Activated CD4-positive, alpha-beta T cell treated with anti-CD3 and anti-CD28 coated beads for 36 hours (primary cell): ENCODE measurements at regions of chr17 and their contacts with region 1.

Region 1: DNA sequence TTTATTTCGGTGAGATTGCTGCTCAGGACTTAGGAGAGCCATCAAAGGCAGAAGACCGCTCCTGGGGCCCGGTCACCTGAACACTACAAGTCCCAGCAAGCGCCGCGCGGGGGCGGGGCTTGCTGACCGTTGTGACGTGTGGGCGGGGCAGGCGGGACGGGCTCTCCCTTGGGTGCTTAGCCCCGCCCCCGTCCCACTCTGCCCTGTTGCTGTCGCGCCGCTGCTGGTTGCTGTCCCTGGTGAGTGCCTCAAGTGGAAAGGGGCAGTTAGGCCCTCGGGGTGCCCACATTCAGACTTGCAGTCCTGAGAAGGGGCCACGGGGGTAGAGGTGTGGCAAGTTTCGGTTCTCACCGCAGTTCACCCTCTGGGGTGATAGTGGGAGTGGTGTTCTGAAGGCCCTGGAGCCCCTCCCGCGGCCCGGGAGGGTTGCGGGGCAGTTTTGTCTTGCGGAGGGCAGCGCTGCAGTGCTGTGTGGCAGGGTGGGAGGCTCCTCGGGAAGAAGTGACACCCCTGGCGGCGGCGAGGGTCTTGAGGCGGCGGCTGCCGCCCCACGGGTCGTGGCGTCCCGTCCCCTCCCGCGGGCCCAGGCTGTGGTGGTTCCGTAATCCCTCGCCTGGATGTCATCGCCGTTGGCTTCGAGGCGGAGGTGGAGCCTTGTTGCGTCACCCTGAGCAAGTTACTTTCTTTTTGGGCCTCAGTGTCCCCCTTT is at the start of gene CALCOCO2:
- DNase-seq: peak; percentile 95
- ATAC-seq: peak; percentile 91
- H3K4me3 Mint-ChIP-seq: peak within 1 kb of the TSS; percentile 84
- H3K27ac Mint-ChIP-seq: peak within 1 kb of the TSS; percentile 96
- H3K4me1 Mint-ChIP-seq: peaks cover 45% of the 10 kb centered on the region
- H3K27me3 Mint-ChIP-seq: no peaks in the 10 kb centered on the region
- total RNA-seq, gene CALCOCO2: 66.7 to 102 TPM

Region 2: GRCh38 chr17:48107168-48108132 is 723.5 kb before region 1 on chr17 and contains the start of gene SNX11:
- CTCF ChIA-PET with region 1: interaction called, 3 read pairs
- POLR2A ChIA-PET with region 1: no interaction called
- intact Hi-C with region 1: loop called in 1 of 2 experiments (anchors 5 kb)
- DNase-seq: peak; percentile 97
- ATAC-seq: peak; percentile 87
- H3K4me3 Mint-ChIP-seq: peak within 1 kb of the TSS; percentile 97
- H3K27ac Mint-ChIP-seq: peak within 1 kb of the TSS; percentile 98
- H3K4me1 Mint-ChIP-seq: peaks cover 61% of the 10 kb centered on the region
- H3K27me3 Mint-ChIP-seq: no peaks in the 10 kb centered on the region
- total RNA-seq, gene SNX11: 18.0 to 21.4 TPM

Region 3: DNA sequence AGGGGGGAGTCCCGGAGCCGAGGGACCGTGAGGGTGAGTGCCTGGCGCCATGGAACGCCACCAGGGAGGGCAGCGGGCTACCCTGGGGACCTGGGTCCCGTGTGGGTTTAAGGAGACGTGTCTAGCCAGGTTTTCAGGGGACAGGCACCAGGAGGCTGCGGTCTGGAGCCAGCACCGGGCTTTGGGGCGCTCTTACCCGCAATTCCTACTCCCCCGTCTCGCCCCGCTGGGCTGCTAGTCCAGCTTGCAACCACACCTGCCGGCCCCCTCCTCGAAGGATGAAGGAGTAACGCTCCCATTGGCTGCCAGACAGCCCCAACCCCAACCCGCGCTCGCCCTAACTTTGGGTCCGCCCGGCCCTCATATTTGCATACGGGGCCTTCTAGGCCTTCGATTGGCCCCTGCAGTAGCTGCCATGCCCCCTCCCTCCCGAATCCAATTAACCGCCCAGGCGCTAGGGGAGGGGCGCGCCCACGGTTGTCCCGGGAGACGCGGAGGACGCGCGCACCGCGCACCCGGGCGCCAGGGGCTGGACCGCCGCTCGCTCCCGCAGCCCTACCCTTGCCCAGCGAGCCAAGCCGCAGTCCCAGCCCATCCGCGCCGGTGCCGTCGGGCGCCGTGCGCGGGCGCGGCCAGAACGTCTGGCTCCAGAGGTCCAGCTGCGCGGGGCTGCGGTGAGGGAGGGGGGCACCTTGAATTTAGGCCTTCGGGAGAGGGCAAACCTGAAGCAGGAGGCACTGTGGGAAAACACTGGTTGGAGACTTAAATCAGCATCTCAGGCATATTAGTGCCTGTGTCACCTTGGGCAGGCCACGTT is 14.0 kb before region 1 on chr17 and contains the start of gene TTLL6:
- CTCF ChIA-PET with region 1: interaction called, 12 read pairs
- POLR2A ChIA-PET with region 1: no interaction called
- intact Hi-C with region 1: loop called in 1 of 2 experiments (anchors 1 kb)
- DNase-seq: peak; percentile 80
- ATAC-seq: peak; percentile 93
- H3K4me3 Mint-ChIP-seq: peak within 1 kb of the TSS; percentile 63
- H3K27ac Mint-ChIP-seq: no peak within 1 kb of the TSS
- H3K4me1 Mint-ChIP-seq: peaks cover 15% of the 10 kb centered on the region
- H3K27me3 Mint-ChIP-seq: peaks cover 35% of the 10 kb centered on the region
- total RNA-seq, gene TTLL6: not detected

Region 4: GRCh38 chr17:48841395-48841831 is 10.4 kb after region 1 on chr17:
- CTCF ChIA-PET with region 1: interaction called, 10 read pairs
- POLR2A ChIA-PET with region 1: no interaction called
- intact Hi-C with region 1: loop called (anchors 1 kb)
- DNase-seq: peak; percentile 64
- ATAC-seq: peak; percentile 92
- H3K4me3 Mint-ChIP-seq: peak overlapping the region; percentile 27
- H3K27ac Mint-ChIP-seq: peak overlapping the region; percentile 51
- H3K4me1 Mint-ChIP-seq: peaks cover 57% of the 10 kb centered on the region
- H3K27me3 Mint-ChIP-seq: peaks cover under 1% of the 10 kb centered on the region

Region 5: GRCh38 chr17:48908047-48908843 is 77.3 kb after region 1 on chr17 and contains the start of gene UBE2Z:
- CTCF ChIA-PET with region 1: no interaction called
- POLR2A ChIA-PET with region 1: no interaction called
- intact Hi-C with region 1: loop called in 1 of 2 experiments (anchors 1 kb)
- DNase-seq: peak; percentile 94
- ATAC-seq: peak; percentile 86
- H3K4me3 Mint-ChIP-seq: peak within 1 kb of the TSS; percentile 89
- H3K27ac Mint-ChIP-seq: peak within 1 kb of the TSS; percentile 97
- H3K4me1 Mint-ChIP-seq: peaks cover 46% of the 10 kb centered on the region
- H3K27me3 Mint-ChIP-seq: no peaks in the 10 kb centered on the region
- total RNA-seq, gene UBE2Z: 104 TPM

Region 6: DNA sequence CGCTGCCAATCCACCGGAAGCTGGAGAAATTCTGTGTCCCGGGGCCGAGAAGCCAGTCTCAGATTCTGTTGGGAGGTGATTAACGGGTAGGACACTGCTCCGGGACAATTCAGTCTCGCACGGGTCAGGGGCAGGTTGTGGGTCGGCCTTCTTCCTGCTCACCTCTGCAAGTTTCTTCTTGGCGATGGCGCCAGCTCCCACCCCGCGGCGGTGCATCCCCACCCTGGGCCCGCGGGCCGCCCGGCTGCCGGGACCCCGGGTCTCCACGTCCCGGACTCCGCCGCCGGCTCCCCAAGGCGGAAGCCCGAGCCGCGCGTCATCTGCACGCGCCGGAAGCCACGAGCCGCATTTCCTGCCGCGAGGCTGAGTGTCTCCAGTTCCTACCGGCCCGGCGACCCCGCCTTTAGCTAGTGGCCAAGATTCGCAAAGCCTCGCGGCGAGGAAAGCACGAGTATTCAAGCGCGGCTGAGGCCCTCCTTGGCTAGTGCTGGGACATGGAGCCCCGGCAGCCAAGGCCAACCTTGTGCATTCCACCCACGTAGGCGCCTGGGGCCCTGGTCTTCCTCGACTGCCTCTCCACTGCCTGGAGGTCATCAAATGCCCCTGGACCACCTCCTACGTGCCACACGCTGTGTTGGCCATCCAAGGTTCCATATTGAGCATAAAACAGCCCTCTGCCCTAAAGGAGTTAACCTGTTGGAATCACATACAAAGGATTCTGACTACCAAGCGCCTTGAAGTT is 113.7 kb after region 1 on chr17 and contains the start of gene SNF8:
- CTCF ChIA-PET with region 1: no interaction called
- POLR2A ChIA-PET with region 1: interaction called, 4 read pairs
- intact Hi-C with region 1: loop called in 1 of 2 experiments (anchors 1 kb)
- DNase-seq: peak; percentile 96
- ATAC-seq: peak; percentile 95
- H3K4me3 Mint-ChIP-seq: peak within 1 kb of the TSS; percentile 92
- H3K27ac Mint-ChIP-seq: peak within 1 kb of the TSS; percentile 96
- H3K4me1 Mint-ChIP-seq: peaks cover 8% of the 10 kb centered on the region
- H3K27me3 Mint-ChIP-seq: no peaks in the 10 kb centered on the region
- total RNA-seq, gene SNF8: 59.5 to 94.0 TPM